ENCODE measurements at regions of chr3 and their contacts with region 1.

Region 1: DNA sequence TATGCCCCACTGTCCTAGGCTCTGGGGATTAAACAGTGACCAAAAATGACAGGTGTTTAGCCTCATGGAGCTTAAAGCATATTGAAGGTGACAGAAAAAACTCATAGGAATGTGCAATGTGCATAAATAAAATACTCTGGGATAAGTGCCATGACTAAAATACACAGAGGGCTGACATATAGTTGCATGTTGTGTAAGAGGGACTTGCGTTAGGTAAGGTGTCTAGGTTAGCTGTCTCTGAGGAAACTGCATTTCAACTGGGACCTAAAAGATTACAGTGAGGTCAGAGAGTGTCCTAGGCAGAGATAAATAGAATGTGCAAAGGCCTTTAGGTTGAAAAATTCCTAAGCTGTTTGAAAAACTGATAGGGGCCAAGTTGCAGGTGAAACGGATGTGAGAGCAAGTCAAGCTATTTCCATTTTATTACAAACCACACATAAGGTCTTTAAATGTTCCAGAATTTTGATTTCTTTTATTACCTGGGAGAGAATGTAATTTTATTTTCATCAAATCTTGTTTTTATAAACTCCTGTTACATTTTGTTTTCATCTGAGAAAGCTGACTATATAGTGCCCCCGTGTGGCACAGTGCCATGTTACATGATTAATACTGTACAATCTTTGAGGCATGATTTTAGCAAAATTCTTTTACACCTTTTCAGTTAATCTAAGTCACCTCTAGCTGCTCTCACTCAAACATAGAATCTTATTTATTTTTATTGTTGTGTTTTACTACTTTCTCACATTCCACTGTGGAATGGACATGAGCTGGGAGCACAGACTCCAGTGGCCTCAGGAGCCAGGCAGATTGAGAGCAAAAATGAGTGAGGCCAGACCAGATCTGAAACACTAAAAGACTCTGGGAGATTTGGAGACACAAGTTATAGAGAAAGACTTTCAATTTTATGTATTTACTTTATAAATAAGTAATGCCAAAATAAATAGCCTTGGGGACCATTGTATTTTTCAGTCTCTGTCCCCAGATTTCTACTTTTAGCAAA is 259.6 kb upstream of the ZNF717 start:
- DNase-seq: peak in 1 of 2 experiments; percentile 74
- H3K4me3 ChIP-seq: no peak overlapping the region; a peak in 1 of 8 replicates
- H3K27ac ChIP-seq: peak overlapping the region; percentile 51; the same call in 1 of the 2 replicates
- H3K4me1 ChIP-seq: peaks cover 4 to 15% (median 12%) of the 10 kb centered on the region in 4 experiments; a peak in 6 of 7 replicates
- H3K27me3 ChIP-seq: no peaks in the 10 kb centered on the region
- CTCF ChIP-seq: peak in 2 of 3 experiments; percentile 21 to 57; a peak in 2 of 4 replicates
- EP300 ChIP-seq: no peak
- POLR2A ChIP-seq: no peak
- RAD21 ChIP-seq: peak; percentile 68 to 76

Region 2: DNA sequence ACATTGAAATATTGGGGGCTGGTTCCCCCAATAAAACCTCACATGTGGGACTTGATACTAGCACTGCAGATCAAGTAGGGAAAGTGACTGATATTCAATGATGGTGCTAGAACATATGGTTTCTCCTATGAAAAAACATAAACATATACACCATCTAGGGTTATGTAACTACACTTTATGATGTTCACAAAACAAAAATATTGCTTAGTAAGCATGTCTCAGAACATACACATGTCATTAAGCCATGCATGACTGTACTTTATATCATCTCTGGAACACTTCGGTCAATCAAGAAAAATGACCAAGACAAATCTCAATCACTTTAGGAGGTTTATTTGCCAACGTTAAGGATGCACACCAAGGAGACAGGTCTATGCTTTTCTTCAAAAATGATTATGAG is 316.9 kb before region 1 on chr3:
- CTCF ChIA-PET with region 1: interaction called, 22 read pairs
- POLR2A ChIA-PET with region 1: no interaction called
- DNase-seq: no peak
- H3K4me3 ChIP-seq: no peak overlapping the region
- H3K27ac ChIP-seq: no peak overlapping the region
- H3K4me1 ChIP-seq: no peaks in the 10 kb centered on the region
- H3K27me3 ChIP-seq: peaks cover 0 to 1% (median 0%) of the 10 kb centered on the region in 4 experiments; a peak in 1 of 7 replicates
- CTCF ChIP-seq: no peak
- EP300 ChIP-seq: no peak
- POLR2A ChIP-seq: no peak
- RAD21 ChIP-seq: no peak

Region 3: GRCh38 chr3:75814797-75815196 is 230.1 kb before region 1 on chr3:
- CTCF ChIA-PET with region 1: interaction called, 22 read pairs
- POLR2A ChIA-PET with region 1: no interaction called
- DNase-seq: no peak
- H3K4me3 ChIP-seq: peak overlapping the region in 1 of 4 experiments; percentile 32; a peak in 1 of 8 replicates
- H3K27ac ChIP-seq: no peak overlapping the region
- H3K4me1 ChIP-seq: peaks cover 0 to 9% (median 6%) of the 10 kb centered on the region in 4 experiments; a peak in 5 of 7 replicates
- H3K27me3 ChIP-seq: no peaks in the 10 kb centered on the region
- CTCF ChIP-seq: no peak
- EP300 ChIP-seq: no peak
- POLR2A ChIP-seq: no peak
- RAD21 ChIP-seq: no peak

Region 4: DNA sequence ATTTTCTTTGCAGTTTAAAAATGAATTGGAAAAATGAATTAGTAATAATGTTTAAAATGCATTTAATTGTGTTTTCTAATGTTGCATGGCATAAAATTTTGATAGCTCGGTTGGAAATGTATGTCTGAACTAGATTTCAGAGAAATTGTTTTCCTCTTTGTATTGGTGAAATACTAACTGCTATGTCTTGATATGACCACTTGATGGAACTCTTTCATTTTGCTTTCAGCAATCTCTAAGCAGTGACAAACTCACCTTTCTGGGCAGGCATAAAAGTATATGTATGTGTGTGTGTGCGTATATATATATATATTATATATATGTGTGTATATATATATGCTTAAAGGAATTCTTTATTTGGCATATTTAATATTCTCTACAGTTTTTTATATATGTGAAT is 20.3 kb before region 1 on chr3:
- CTCF ChIA-PET with region 1: interaction called, 54 read pairs
- POLR2A ChIA-PET with region 1: interaction called, 3 read pairs
- DNase-seq: no peak
- H3K4me3 ChIP-seq: no peak overlapping the region
- H3K27ac ChIP-seq: no peak overlapping the region
- H3K4me1 ChIP-seq: no peaks in the 10 kb centered on the region
- H3K27me3 ChIP-seq: no peaks in the 10 kb centered on the region
- CTCF ChIP-seq: peak in 2 of 3 experiments; percentile 40 to 57; a peak in 2 of 4 replicates
- EP300 ChIP-seq: no peak
- POLR2A ChIP-seq: no peak
- RAD21 ChIP-seq: peak; percentile 83 to 84

Region 5: DNA sequence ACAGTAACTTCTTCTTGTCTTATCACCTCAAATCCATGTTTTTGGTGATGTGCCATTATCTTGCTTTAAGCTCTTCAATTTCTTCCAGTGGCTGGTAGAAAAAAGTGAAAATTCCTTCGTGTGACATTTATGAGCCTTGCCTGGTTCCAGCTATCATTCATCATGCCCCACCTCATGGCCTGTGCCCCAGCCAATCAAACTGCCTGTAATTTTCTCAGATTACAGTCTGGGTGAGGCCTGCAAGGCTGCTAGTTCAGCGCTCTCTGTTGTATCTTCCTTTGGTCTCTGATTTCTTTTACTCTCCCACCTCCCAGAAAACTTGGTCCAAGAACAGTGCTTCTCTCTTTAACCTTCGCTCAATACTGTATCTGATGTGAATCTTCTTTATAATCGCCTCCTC is 10.2 kb before region 1 on chr3:
- CTCF ChIA-PET with region 1: interaction called, 38 read pairs
- POLR2A ChIA-PET with region 1: interaction called, 14 read pairs
- DNase-seq: no peak
- H3K4me3 ChIP-seq: no peak overlapping the region
- H3K27ac ChIP-seq: no peak overlapping the region
- H3K4me1 ChIP-seq: peaks cover 2 to 15% (median 11%) of the 10 kb centered on the region in 4 experiments; a peak in 6 of 7 replicates
- H3K27me3 ChIP-seq: no peaks in the 10 kb centered on the region
- CTCF ChIP-seq: no peak
- EP300 ChIP-seq: no peak
- POLR2A ChIP-seq: no peak
- RAD21 ChIP-seq: no peak

Region 6: GRCh38 chr3:76063019-76063418 is 18.1 kb after region 1 on chr3:
- CTCF ChIA-PET with region 1: interaction called, 21 read pairs
- POLR2A ChIA-PET with region 1: interaction called, 6 read pairs
- DNase-seq: no peak
- H3K4me3 ChIP-seq: no peak overlapping the region
- H3K27ac ChIP-seq: no peak overlapping the region
- H3K4me1 ChIP-seq: peaks cover 0 to 4% (median 1%) of the 10 kb centered on the region in 4 experiments; a peak in 1 of 7 replicates
- H3K27me3 ChIP-seq: no peaks in the 10 kb centered on the region
- CTCF ChIP-seq: no peak
- EP300 ChIP-seq: no peak
- POLR2A ChIP-seq: no peak
- RAD21 ChIP-seq: no peak

Region 7: GRCh38 chr3:76131396-76132153 is 86.7 kb after region 1 on chr3:
- CTCF ChIA-PET with region 1: no interaction called
- POLR2A ChIA-PET with region 1: no interaction called
- DNase-seq: no peak
- H3K4me3 ChIP-seq: no peak overlapping the region
- H3K27ac ChIP-seq: no peak overlapping the region
- H3K4me1 ChIP-seq: peaks cover 0 to 3% (median 0%) of the 10 kb centered on the region in 4 experiments; a peak in 1 of 7 replicates
- H3K27me3 ChIP-seq: no peaks in the 10 kb centered on the region
- CTCF ChIP-seq: no peak
- EP300 ChIP-seq: no peak
- POLR2A ChIP-seq: no peak
- RAD21 ChIP-seq: no peak

Measured in H1 (cell line).